Mucosa of descending colon (tissue), 3 donors: ENCODE measurements at regions of chr3 and their contacts with region 1.

Region 1: DNA sequence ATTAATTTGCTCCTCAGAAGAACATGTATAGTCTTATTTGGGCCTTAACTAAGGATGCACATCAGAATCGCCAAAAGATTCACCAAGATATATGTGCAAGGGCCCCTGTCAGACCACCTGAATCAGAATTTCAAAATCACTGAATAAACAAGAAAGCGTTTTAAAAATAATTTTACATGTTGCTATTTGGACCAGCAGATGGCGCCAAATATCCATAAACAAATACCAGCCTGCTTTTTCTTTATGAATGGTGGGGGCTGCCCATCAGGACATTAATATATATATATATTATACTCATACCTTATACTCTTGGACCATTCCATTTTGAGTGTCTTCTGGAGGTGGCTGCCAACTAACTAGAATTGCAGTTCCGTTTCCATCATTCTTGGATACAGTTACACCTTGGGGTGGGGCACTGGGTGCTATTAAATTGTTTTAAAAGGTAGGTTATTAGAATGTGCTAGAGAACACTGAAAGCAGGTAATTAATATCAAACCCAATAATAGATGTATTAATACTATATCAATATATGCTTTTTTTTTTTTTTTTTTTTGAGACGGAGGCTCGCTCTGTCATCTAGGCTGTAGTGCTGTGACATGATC is 1108.3 kb downstream of the ROBO1 start:
- DNase-seq: peak in 1 of 3 donors; percentile 68
- ATAC-seq: no peak
- H3K4me3 ChIP-seq: no peak overlapping the region
- H3K4me1 ChIP-seq: no peaks in the 10 kb centered on the region
- CTCF ChIP-seq: no peak

Region 2: GRCh38 chr3:79032686-79033318 is 373.3 kb after region 1 on chr3:
- intact Hi-C with region 1: loop called (anchors 5 to 10 kb)
- DNase-seq: peak in 1 of 3 donors; percentile 34
- ATAC-seq: no peak
- H3K4me3 ChIP-seq: no peak overlapping the region
- H3K4me1 ChIP-seq: no peaks in the 10 kb centered on the region
- CTCF ChIP-seq: no peak